Activated CD4-positive, alpha-beta memory T cell treated with anti-CD3 and anti-CD28 coated beads for 36 hours (primary cell): ENCODE measurements at regions of chr11 and their contacts with region 1.

Region 1: DNA sequence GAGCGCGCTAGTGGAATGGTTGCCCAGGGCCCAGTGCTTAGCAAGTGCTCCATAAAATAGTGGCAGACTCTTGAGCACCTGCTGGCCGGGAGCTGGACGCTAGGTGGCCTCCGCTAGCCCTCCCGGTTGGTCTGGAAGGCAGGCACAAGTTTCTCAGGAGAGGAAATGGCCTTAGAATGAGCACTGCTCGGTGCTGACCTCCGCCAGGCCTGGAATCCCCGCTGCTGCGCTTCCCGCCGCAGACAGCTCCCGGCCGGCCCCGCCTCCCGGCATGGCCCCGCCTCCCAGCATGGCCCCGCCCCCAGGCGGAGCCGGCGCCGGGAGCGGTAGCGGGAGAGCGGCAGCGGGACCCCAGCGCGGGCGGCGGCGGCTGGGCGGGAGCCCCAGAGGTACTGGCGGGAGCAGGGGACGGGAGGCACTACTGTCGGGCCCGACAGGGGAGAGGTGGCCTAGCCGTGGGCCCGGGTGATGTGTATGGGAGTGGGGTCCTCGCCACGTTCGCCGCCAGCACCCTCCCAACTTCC is at the start of gene SIPA1:
- DNase-seq: peak; percentile 75
- H3K4me3 Mint-ChIP-seq: peak within 1 kb of the TSS; percentile 85
- H3K27ac Mint-ChIP-seq: peak within 1 kb of the TSS; percentile 95
- H3K4me1 Mint-ChIP-seq: peaks cover 38% of the 10 kb centered on the region
- H3K27me3 Mint-ChIP-seq: no peaks in the 10 kb centered on the region
- total RNA-seq, gene SIPA1: 163 to 167 TPM

Region 2: GRCh38 chr11:65288706-65289536 is 348.9 kb before region 1 on chr11:
- CTCF ChIA-PET with region 1: no interaction called
- POLR2A ChIA-PET with region 1: no interaction called
- intact Hi-C with region 1: no loop called
- DNase-seq: no peak
- H3K4me3 Mint-ChIP-seq: no peak overlapping the region
- H3K27ac Mint-ChIP-seq: no peak overlapping the region
- H3K4me1 Mint-ChIP-seq: peaks cover 4% of the 10 kb centered on the region
- H3K27me3 Mint-ChIP-seq: no peaks in the 10 kb centered on the region

Region 3: GRCh38 chr11:65625628-65626342 is 12.1 kb before region 1 on chr11:
- CTCF ChIA-PET with region 1: interaction called, 11 read pairs
- POLR2A ChIA-PET with region 1: no interaction called
- intact Hi-C with region 1: no loop called
- DNase-seq: peak; percentile 67
- H3K4me3 Mint-ChIP-seq: no peak overlapping the region
- H3K27ac Mint-ChIP-seq: peak overlapping the region; percentile 34
- H3K4me1 Mint-ChIP-seq: peaks cover 2% of the 10 kb centered on the region
- H3K27me3 Mint-ChIP-seq: no peaks in the 10 kb centered on the region

Region 4: DNA sequence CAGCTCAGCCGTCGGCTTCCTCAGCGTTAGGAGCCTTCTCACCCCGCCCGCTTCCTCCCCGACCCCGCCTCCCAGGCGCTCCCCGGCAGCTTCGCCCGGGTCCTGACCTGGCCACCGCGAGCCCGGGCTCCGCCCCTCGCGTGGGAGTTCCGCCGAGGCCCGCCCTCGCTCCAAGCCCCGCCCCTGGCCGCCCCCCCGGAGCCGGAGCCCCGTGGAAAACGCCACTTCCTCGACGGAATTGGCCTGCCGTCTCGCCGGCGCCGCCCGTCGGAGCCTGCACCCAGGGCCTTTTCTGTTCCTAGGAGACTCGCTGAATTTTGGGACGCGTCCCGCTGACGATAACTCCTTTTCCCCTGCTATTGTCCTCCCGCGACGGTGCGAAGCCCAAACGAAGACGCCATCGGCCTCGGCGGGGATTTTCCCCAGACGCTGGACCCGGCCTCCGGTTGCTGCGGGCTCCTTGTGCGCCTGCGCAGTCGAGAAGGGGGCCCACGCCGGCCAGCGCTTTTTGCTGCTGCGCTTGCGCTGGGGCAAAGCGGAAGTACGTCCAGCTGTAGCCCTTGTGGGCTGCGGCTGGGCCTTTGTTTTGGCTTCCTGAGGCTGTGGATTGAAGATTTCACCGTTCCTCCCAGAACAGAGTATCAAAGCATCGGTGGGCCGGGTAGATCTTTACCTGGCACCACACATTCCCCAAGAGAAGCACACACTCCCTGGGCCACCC is 14.8 kb after region 1 on chr11:
- CTCF ChIA-PET with region 1: interaction called, 18 read pairs
- POLR2A ChIA-PET with region 1: interaction called, 20 read pairs
- intact Hi-C with region 1: loop called (anchors 1 kb)
- DNase-seq: peak; percentile 97
- H3K4me3 Mint-ChIP-seq: peak overlapping the region; percentile 77
- H3K27ac Mint-ChIP-seq: peak overlapping the region; percentile 93
- H3K4me1 Mint-ChIP-seq: peaks cover 51% of the 10 kb centered on the region
- H3K27me3 Mint-ChIP-seq: no peaks in the 10 kb centered on the region

Region 5: DNA sequence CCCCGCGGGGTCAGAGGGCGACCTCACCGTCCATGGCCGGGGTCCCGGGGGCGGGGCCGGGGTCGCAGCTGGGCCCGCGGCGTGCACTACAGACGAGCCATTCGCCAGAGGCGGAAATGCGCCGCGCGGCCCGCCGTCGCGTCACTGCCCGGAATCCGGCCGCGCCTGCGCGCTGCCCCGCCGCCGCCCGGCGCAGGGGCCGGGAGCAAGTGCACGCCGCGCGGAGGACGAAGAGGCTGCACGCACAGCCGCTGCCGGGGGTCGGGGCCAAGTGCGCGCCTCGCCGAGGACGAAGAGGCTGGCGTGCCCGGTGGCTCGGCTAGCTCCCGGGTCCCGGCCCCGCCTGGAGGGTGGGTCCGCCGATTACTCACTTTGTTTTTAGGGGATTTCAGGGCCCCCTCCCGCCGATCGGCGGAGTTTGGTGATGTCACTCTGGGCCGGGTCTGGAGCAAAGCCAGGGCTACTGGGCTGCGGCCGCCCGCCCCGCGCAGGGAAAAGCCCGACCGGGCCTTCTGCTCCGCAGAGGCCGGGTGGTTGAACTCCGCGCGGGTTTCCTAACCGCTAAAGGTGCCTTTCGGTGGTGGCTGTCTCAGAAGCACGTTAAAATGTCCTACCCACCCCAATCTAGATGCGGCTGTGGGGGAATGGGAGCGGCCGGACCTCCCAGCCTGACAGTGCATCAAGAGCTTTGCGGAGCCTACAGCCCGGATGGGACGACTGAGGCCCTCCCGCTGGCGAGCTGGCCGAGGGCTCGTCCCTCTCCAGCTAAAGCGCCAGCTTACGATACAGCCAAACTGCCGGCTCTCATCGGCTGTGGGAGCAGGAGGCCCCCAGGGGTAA is 25.2 kb after region 1 on chr11 and contains the start of gene RELA:
- CTCF ChIA-PET with region 1: interaction called, 3 read pairs
- POLR2A ChIA-PET with region 1: interaction called, 6 read pairs
- intact Hi-C with region 1: loop called (anchors 1 kb)
- DNase-seq: peak; percentile 95
- H3K4me3 Mint-ChIP-seq: peak within 1 kb of the TSS; percentile 85
- H3K27ac Mint-ChIP-seq: peak within 1 kb of the TSS; percentile 95
- H3K4me1 Mint-ChIP-seq: peaks cover 38% of the 10 kb centered on the region
- H3K27me3 Mint-ChIP-seq: no peaks in the 10 kb centered on the region
- total RNA-seq, gene RELA: 74.9 to 76.5 TPM

Region 6: GRCh38 chr11:65810046-65810868 is 172.4 kb after region 1 on chr11:
- CTCF ChIA-PET with region 1: no interaction called
- POLR2A ChIA-PET with region 1: no interaction called
- intact Hi-C with region 1: no loop called
- DNase-seq: no peak
- H3K4me3 Mint-ChIP-seq: no peak overlapping the region
- H3K27ac Mint-ChIP-seq: no peak overlapping the region
- H3K4me1 Mint-ChIP-seq: no peaks in the 10 kb centered on the region
- H3K27me3 Mint-ChIP-seq: peaks cover 3% of the 10 kb centered on the region

Region 7: DNA sequence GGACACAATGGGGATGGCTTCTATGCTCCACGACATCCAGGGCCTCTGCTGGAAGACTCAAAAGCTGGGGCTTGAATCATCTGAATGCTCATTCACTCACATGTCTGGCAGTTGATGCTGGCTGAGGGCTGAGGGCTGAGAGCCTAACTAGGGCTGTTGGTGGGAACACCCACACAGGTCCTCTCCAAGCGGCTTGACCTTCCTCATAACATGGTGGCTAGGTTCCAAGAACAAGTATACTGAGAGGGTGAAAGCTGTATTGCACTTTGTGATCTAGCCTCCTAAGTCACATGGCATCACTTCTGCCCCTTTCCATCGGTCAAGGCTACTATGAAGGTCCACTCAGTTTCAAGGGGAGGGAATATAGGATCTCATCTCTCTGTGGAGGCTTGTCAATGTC is 661.3 kb after region 1 on chr11:
- CTCF ChIA-PET with region 1: no interaction called
- POLR2A ChIA-PET with region 1: no interaction called
- intact Hi-C with region 1: no loop called
- DNase-seq: no peak
- H3K4me3 Mint-ChIP-seq: no peak overlapping the region
- H3K27ac Mint-ChIP-seq: no peak overlapping the region
- H3K4me1 Mint-ChIP-seq: no peaks in the 10 kb centered on the region
- H3K27me3 Mint-ChIP-seq: peaks cover 2% of the 10 kb centered on the region